Dendritic cell treated with granulocyte-macrophage colony-stimulating factor and Interleukin-4, amounts not matched to agents 40 ng/mL and 50 ng/mL, for 4 days (primary cell): ENCODE measurements at regions of chr11 and their contacts with region 1.

Region 1: GRCh38 chr11:62081378-62082291 is 42.2 kb upstream of the INCENP start:
- H3K4me3 Mint-ChIP-seq: peak overlapping the region; percentile 51
- H3K27ac Mint-ChIP-seq: peak overlapping the region; percentile 44
- H3K4me1 Mint-ChIP-seq: peaks cover 15% of the 10 kb centered on the region
- H3K27me3 Mint-ChIP-seq: no peaks in the 10 kb centered on the region

Region 2: GRCh38 chr11:61281581-61282250 is 799.9 kb before region 1 on chr11:
- intact Hi-C with region 1: no loop called
- H3K4me3 Mint-ChIP-seq: no peak overlapping the region
- H3K27ac Mint-ChIP-seq: no peak overlapping the region
- H3K4me1 Mint-ChIP-seq: peaks cover 5% of the 10 kb centered on the region
- H3K27me3 Mint-ChIP-seq: peaks cover 16% of the 10 kb centered on the region

Region 3: GRCh38 chr11:61871158-61871597 is 210.5 kb before region 1 on chr11:
- intact Hi-C with region 1: loop called (anchors 1 kb)
- H3K4me3 Mint-ChIP-seq: no peak overlapping the region
- H3K27ac Mint-ChIP-seq: peak overlapping the region; percentile 35
- H3K4me1 Mint-ChIP-seq: peaks cover 24% of the 10 kb centered on the region
- H3K27me3 Mint-ChIP-seq: peaks cover 23% of the 10 kb centered on the region

Region 4: DNA sequence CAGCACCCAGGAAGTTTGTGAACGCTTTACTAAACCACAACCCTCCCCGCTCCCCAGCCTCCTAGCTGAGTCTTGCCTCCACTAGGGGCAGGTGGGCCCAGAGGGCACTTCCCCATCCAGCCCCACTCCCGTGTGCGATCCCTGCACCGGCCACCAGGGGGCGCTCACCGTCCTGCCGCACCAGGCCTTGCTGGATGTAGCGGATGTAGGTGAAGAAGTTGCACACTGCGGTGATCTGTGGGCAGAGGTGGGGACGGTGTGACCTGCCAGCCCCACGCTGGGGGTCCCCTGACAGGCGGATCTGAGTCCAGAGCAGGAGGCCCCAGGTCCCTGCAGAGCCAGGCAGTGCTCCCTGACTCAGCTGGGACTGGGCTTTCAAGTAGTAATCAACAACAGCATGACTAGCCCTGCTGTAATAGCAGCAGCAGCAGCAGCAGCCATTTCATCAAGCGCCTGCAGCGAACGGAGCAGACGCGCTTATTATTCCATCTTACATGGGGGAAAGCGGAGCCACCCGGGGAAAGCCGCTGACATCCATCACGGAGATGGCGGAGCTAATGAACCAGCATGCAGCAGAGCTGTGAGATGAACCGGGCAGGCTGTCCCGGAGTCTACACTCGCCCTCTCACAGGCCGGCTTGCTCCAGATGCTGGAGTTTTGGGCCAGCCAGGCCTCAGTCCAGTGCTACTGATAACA is 182.3 kb before region 1 on chr11:
- intact Hi-C with region 1: loop called (anchors 2 kb)
- H3K4me3 Mint-ChIP-seq: no peak overlapping the region
- H3K27ac Mint-ChIP-seq: no peak overlapping the region
- H3K4me1 Mint-ChIP-seq: peaks cover 23% of the 10 kb centered on the region
- H3K27me3 Mint-ChIP-seq: peaks cover 14% of the 10 kb centered on the region

Region 5: GRCh38 chr11:61947486-61948210 is 134.0 kb before region 1 on chr11:
- intact Hi-C with region 1: loop called (anchors 5 kb)
- H3K4me3 Mint-ChIP-seq: no peak overlapping the region
- H3K27ac Mint-ChIP-seq: peak overlapping the region; percentile 27
- H3K4me1 Mint-ChIP-seq: peaks cover 26% of the 10 kb centered on the region
- H3K27me3 Mint-ChIP-seq: peaks cover 14% of the 10 kb centered on the region

Region 6: DNA sequence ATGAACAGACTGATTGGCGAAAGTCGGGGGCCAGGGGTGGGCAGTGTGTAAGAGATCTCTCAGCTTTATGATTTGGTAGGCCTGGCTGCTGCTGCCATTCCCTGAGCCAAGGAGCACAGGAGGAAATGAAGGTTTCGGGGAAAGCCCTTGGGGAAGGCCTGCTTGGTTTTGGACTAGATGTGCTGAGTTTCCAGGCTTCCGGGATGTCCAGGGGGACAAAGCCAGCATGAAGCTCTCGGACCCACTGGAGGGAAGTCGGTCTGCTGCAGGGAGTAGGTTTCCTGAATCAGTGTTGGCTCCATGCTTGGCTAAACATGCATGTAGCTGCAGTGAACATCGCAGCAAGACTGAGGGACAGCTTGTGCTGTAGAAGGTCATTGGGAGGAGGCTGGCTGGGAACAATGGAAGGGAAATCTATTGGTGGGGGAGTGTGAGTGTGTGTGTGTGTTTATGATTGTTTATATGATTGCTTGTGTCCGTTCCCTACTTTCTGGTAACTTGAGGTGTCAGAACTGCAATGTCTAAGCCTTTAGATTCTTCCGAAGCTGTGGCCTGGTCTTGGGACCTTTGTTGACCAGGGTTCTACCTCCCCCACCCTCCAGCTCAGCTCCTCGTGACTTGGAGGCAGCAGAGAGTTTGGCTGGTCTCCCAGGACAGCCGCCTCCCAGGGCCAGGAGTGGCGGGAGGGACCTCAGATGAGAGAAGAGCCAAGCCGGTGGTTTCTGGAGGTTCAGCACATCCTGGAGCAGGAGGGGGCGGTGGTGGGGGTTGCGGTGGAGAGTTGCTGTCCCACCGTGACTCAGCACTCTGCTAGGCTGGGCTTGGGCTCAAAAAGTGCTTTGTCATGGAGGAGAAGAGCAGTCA is 110.2 kb before region 1 on chr11:
- intact Hi-C with region 1: loop called (anchors 5 kb)
- H3K4me3 Mint-ChIP-seq: peak overlapping the region; percentile 56
- H3K27ac Mint-ChIP-seq: peak overlapping the region; percentile 99
- H3K4me1 Mint-ChIP-seq: peaks cover 81% of the 10 kb centered on the region
- H3K27me3 Mint-ChIP-seq: no peaks in the 10 kb centered on the region

Region 7: GRCh38 chr11:62025487-62026105 is 56.0 kb before region 1 on chr11:
- intact Hi-C with region 1: loop called (anchors 5 kb)
- H3K4me3 Mint-ChIP-seq: peak overlapping the region; percentile 26
- H3K27ac Mint-ChIP-seq: peak overlapping the region; percentile 91
- H3K4me1 Mint-ChIP-seq: peaks cover 43% of the 10 kb centered on the region
- H3K27me3 Mint-ChIP-seq: no peaks in the 10 kb centered on the region